CD14-positive monocyte (primary cell): ENCODE measurements at regions of chr3 and their contacts with region 1.

Region 1: DNA sequence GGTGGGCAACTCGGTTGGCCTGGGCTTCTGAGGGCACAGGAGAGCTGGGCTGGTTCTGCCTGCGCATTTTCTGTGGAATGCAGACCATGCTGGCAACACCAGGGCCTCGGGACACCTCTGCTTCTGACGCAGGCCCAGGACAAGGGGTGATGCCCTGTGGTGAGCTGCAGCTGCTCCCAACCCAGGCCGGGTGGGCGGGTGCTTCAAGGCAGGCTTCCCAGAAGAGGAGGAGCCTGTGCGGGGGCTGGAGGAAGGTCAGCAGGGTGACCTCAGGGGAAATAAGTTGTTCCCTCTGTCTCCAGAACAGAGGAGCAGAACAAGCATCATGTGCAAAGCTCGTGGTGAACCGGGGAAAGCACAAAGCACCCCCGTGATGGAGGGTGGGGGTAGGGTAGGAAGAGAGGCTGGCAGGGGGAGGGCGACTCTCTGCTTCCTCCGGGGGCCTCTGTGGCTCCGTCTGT is 11.0 kb upstream of the PLXNA1 start:
- DNase-seq: peak in 2 of 3 donors; percentile 7 to 31
- H3K4me3 ChIP-seq: no peak overlapping the region
- H3K4me3 Mint-ChIP-seq: peak overlapping the region in 1 of 2 donors; percentile 42
- H3K27ac ChIP-seq: no peak overlapping the region
- H3K27ac Mint-ChIP-seq: no peak overlapping the region
- H3K4me1 ChIP-seq: no peaks in the 10 kb centered on the region
- H3K4me1 Mint-ChIP-seq: no peaks in the 10 kb centered on the region
- H3K27me3 ChIP-seq: peaks cover 0 to 36% of the 10 kb centered on the region in 2 donors
- H3K27me3 Mint-ChIP-seq: peaks cover 11 to 63% (median 42%) of the 10 kb centered on the region in 3 donors
- CTCF ChIP-seq: no peak

Region 2: DNA sequence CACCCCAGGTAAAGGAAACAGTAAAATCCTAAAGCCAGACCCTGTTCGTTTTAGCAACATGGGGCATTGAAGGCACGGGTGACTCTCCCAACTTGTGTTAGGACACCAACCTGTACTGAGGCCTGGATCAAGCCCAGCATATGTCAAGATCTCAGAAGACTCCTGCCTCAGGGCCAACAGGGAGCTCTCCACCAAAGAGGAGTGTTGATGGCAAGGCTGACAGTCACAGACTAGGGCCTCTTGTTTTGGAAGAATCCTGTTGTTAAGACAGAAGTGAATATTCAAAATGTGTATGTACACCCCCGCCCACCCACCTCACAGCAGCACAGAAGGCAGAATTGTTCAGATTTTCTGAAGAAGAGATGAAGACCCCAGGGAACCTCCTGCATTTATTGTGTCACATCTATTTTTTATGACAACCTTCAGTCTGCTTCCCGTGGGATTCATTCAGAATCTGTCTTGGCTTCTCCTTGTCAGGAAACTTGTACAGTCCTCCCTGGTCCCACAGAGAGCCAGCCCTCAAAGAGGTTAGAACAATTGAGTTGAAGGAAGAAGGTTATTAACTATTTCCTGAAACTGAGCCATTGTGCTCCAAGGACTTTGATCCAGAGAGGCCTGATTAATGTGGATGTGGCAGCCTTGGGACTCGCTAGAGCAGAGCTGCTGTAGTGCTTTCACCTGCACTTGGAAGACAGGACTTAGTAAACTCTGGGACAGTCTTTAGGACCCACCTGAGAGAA is 50.7 kb before region 1 on chr3:
- intact Hi-C with region 1: loop called in 1 of 2 experiments (anchors 5 kb)
- DNase-seq: no peak
- H3K4me3 ChIP-seq: no peak overlapping the region
- H3K4me3 Mint-ChIP-seq: peak overlapping the region in 1 of 2 donors; percentile 79
- H3K27ac ChIP-seq: no peak overlapping the region
- H3K27ac Mint-ChIP-seq: peak overlapping the region in 1 of 7 donors; percentile 30
- H3K4me1 ChIP-seq: peaks cover 23 to 38% of the 10 kb centered on the region in 2 donors
- H3K4me1 Mint-ChIP-seq: peaks cover 28% of the 10 kb centered on the region
- H3K27me3 ChIP-seq: peaks cover 71 to 87% of the 10 kb centered on the region in 2 donors
- H3K27me3 Mint-ChIP-seq: peaks cover 69 to 91% (median 86%) of the 10 kb centered on the region in 3 donors
- CTCF ChIP-seq: no peak

Region 3: DNA sequence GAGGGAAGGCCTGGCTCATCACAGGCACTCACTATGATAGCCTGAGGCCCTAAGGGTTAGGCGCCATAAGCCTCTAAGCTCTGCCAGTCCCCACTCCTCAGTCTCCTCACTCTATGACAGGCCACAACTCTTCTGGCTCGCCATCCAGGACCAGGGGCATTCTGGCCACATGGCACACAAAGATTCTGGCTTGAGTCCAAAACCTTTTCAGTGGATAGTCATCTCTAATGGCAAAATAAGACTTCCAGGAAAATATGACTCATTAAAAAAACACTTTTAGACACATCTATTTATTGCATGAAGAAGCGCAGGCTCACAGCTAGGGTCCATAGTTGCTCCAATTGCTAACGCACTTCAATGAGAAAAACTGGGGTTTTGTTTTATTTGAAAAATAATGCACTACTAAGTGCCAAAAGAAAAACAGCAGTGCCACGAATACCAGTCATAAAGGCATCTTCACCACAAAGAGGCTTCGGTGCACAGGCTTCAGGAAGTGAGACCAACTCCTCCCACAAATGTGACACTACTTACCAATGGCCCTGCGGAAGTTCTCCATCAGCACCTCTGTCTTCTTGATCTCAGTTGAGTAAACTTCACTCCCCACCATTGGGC is 1140.5 kb after region 1 on chr3:
- intact Hi-C with region 1: no loop called
- DNase-seq: no peak
- H3K4me3 ChIP-seq: no peak overlapping the region
- H3K4me3 Mint-ChIP-seq: no peak overlapping the region
- H3K27ac ChIP-seq: no peak overlapping the region
- H3K27ac Mint-ChIP-seq: peak overlapping the region in 4 of 7 donors; percentile 50 to 56 (median 55)
- H3K4me1 ChIP-seq: no peaks in the 10 kb centered on the region
- H3K4me1 Mint-ChIP-seq: no peaks in the 10 kb centered on the region
- H3K27me3 ChIP-seq: no peaks in the 10 kb centered on the region
- H3K27me3 Mint-ChIP-seq: no peaks in the 10 kb centered on the region
- CTCF ChIP-seq: no peak